Naive thymus-derived CD4-positive, alpha-beta T cell (primary cell): ENCODE measurements at regions of chr5 and their contacts with region 1.

Region 1: DNA sequence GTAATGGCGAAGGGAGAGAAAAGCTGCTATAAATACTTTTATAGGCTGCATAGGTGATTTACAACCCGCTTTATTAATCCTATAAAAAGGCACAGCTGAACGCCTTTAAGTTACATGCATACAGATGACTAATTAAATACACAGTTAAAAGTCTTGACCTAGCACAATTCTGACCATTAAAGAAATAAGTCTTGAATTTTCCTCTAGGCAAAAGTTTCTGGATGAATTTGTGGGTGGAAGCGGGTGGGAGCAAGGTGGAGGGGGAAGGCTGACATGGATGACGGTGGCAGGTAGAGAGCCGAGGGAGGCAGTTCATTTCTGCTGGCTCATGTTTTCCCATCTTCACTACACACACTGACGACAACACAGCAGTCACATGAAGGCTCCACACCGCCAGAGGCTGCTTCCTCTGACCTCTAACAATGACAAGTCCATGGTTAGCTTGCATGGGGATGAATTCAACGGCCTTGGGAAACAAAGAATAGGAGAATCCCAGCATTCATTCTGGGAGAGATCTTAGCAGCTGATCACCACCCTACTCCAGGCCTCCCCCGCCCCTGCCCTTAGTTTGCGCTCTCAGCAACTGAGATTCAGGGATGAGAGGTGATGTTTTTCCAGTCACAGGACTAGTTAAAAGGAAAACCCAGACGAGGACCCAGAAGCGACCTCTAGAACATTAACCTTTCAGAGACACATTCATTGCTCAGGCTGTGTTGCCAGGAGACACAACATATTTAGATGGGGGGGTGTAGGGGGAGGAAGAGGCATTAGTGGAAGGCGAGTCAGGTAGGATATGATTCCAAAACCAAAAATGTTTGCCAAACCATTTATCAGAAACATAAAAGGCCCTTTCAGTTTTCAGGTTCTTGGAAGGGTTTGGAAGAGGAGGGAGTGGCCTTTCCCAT is 329.3 kb downstream of the PIK3R1 start:
- DNase-seq: no peak
- ATAC-seq: no peak
- H3K4me3 ChIP-seq: no peak overlapping the region
- H3K4me3 Mint-ChIP-seq: no peak overlapping the region
- H3K27ac ChIP-seq: no peak overlapping the region
- H3K27ac Mint-ChIP-seq: no peak overlapping the region
- H3K4me1 ChIP-seq: no peaks in the 10 kb centered on the region
- H3K4me1 Mint-ChIP-seq: peaks cover 0 to 9% (median 2%) of the 10 kb centered on the region in 7 donors
- H3K27me3 ChIP-seq: peaks cover 0 to 7% of the 10 kb centered on the region in 2 donors
- H3K27me3 Mint-ChIP-seq: peaks cover 6 to 26% (median 17%) of the 10 kb centered on the region in 5 donors

Region 2: DNA sequence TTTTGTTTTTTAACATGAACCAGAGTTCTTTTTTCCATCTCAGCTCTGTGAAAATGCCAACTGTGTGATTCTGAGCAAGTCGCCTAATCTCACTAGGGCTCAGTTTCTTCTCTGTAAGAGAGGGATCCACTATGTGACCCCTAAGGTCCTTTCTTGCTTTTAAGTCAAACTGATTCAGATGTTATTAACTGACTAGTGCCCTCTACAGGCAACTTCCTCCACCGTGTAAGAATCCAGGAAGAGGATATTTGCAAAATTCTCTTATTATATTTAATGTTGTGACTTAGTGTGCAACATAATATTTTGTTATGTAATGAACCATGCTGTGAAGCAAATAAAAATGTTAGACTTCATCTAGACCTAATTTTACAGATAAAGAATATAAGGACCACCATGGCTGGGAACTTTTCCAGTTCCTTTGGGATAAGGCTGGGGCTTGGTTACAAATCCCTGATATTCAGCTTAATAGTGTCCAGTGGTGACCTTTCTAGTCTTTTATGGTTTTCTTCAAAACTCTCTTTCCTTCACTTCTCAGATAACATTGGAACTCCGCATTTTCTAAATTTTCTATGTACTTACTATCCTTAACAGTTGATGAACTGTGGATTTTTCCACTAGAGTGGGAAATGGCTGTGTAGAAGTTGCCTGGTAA is 84.6 kb before region 1 on chr5:
- CTCF ChIA-PET with region 1: no interaction called
- POLR2A ChIA-PET with region 1: no interaction called
- intact Hi-C with region 1: loop called in 1 of 2 experiments (anchors 5 kb)
- DNase-seq: peak in 7 of 9 donors; percentile 29 to 59 (median 44)
- ATAC-seq: peak; percentile 77
- H3K4me3 ChIP-seq: no peak overlapping the region
- H3K4me3 Mint-ChIP-seq: no peak overlapping the region
- H3K27ac ChIP-seq: no peak overlapping the region
- H3K27ac Mint-ChIP-seq: peak overlapping the region in 1 of 9 donors; percentile 20
- H3K4me1 ChIP-seq: peaks cover 0 to 13% of the 10 kb centered on the region in 2 donors
- H3K4me1 Mint-ChIP-seq: peaks cover 4 to 21% (median 13%) of the 10 kb centered on the region in 7 donors
- H3K27me3 ChIP-seq: no peaks in the 10 kb centered on the region
- H3K27me3 Mint-ChIP-seq: peaks cover 0 to under 1% (median 0%) of the 10 kb centered on the region in 5 donors

Region 3: DNA sequence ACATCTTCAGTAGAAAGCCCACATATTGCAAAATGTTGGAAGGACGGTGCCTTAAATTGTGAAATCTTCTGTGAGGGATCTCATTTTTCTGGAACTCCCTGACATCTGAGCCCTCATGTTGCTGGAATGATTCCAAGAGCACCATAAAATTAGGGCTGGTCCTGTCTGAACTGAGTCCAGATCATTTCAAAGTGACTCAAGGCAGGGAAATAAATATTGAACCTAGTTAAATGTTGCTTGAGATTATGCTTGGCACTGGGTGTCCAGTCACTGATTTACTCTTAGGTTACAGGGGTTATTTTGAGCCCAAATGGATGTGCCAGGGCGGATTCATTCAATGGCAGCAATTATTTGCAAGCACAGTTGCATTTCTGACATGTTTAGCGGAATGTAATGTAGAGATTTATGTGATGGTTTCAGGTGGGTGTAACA is 107.7 kb after region 1 on chr5:
- CTCF ChIA-PET with region 1: no interaction called
- POLR2A ChIA-PET with region 1: no interaction called
- intact Hi-C with region 1: no loop called
- DNase-seq: no peak
- ATAC-seq: no peak
- H3K4me3 ChIP-seq: no peak overlapping the region
- H3K4me3 Mint-ChIP-seq: no peak overlapping the region
- H3K27ac ChIP-seq: no peak overlapping the region
- H3K27ac Mint-ChIP-seq: no peak overlapping the region
- H3K4me1 ChIP-seq: no peaks in the 10 kb centered on the region
- H3K4me1 Mint-ChIP-seq: no peaks in the 10 kb centered on the region
- H3K27me3 ChIP-seq: no peaks in the 10 kb centered on the region
- H3K27me3 Mint-ChIP-seq: no peaks in the 10 kb centered on the region